Sciatic nerve (tissue), 2 donors: ENCODE measurements at regions of chr21 and their contacts with region 1.

Region 1: DNA sequence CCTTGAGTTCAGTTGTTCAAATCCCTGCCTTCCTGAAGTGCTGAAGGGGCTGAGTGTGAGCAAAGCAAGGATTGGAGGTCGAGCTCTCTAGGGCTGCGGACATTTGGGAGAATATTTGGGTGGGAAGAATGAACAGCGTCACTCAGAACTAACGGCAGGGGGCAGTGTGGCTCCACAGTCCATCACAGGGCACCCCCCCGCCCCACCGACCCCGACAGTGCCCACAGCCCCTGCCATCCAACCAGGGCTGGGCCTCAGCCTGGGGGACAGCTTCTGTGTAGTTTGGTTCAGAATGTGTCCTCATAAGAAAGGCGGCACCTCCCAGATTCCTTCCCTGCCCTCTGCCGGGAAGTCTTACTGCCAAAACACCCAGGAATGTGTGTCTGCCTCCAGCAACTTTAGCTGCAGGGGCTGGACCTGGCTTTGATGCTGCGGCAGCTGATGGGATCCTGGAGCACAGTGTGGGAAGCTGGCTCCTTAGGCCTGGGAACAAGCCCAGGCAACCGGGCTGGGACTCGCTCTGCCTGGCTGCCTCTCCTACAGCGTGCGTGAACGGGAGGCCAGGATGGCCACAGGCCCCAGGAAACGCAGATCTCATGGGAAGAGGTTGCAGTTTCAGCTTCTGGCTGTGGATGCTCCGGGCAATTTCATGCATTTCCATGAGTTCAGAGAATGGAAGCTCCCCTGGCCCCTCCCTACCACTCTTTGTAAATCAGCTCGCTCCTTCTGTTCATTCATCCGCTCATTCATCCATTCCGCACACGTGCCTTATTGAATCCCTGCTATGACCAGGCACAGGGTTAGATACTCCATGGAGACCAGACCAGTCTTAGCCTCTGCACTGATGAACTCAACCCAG is 104.9 kb upstream of the TMPRSS2 start:
- DNase-seq: peak; percentile 87
- ATAC-seq: peak; percentile 93

Region 2: DNA sequence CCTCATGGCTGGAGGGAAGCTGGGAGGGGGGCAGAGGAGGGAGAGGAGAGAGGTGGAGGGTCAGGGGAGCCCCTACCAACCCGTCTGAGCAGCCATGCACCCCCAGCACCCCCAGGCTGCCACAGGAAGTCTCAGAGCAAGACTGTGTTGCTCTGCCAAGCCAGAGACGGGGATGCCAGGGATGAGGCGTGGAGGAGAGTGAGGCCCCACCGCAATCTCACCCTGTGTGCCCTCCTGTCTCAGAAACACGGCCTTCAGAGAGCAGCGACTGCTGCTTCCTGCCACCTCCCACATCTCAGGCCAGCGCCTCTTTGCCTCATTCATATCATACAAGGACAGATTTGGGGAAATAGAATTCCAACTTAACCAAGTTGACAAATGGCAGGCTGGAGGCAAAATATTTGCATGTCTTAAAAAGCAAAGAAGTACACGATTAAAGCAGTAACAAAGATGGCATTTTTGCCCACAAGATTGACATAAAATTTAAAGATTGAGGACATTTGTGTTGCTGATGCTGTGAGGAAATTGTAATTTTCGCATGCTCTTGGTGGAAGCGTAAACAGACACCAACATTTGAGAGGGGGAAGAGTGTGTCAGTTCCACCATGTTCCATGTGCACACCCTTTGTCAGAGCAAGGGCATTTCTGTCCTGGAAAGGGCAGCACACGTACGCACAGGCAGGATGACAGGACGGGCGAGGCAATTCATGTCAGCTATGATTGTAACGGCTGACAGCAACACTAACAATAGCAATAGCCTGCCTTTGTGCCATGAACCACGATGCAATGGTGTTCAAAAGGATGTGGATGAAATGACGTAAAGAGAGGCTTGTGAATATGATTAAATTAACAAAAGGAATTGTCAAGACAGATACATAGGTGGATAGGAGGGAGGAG is 504.0 kb before region 1 on chr21:
- intact Hi-C with region 1: no loop called
- DNase-seq: no peak
- ATAC-seq: no peak

Region 3: DNA sequence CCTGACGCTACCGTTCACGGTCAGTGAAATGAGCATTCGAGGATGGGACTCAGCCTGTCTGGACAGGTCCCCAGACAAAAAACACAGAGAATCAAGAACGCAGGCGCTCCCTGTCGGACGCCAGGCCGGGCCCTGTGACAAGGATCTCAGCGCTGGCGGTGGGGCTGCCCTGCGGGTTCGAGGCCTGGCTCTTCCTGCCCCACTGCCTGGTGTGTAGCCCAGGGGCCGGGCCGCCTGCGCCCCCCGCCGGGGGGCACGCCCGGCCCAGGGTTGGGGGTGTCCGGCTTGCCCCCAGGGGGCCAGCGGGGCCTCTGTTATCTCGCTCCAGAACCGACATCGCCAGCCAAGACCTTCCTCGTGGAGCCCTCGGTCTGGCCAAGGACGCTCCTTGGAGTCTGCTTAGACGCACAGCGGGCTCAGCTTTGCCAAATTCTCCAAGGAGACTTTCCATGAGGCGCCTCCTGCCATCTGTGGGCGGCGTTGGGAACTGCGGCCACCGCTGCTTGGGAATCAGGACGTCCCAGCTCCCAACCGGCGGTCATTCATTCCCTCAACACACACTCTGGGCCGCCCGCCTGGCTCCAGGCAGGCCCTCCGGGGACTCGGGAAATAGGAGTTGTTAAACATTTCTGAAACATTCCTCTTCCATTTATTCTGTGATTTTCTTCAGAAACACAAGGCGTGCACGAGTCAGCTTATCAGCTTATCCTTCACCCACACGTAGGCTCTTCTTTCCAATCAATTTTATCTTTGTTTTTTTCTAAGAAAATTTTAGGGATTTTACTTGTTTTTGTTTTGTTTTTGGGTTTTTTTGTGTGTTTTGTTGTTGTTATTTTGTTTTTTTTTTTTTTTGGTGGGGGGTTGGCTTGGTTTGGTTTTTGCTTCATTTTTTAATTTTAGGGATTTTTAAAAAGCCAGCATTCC is 165.3 kb after region 1 on chr21:
- intact Hi-C with region 1: loop called (anchors 2 kb)
- DNase-seq: peak; percentile 92
- ATAC-seq: peak; percentile 97